CD4-positive, alpha-beta memory T cell (primary cell): ENCODE measurements at regions of chr5 and their contacts with region 1.

Region 1: GRCh38 chr5:61331407-61332357 is at the start of gene ZSWIM6:
- DNase-seq: peak; percentile 96 to 99 (median 98)
- H3K4me3 ChIP-seq: peak within 1 kb of the TSS; percentile 42 to 88
- H3K4me3 Mint-ChIP-seq: peak within 1 kb of the TSS; percentile 82 to 100 (median 95)
- H3K27ac ChIP-seq: peak within 1 kb of the TSS; percentile 82
- H3K27ac Mint-ChIP-seq: peak within 1 kb of the TSS; percentile 91 to 99 (median 97)
- H3K4me1 ChIP-seq: peaks cover 24% of the 10 kb centered on the region
- H3K4me1 Mint-ChIP-seq: peaks cover 21 to 51% (median 28%) of the 10 kb centered on the region in 4 donors
- H3K27me3 ChIP-seq: no peaks in the 10 kb centered on the region
- H3K27me3 Mint-ChIP-seq: peaks cover 15 to 18% of the 10 kb centered on the region in 2 donors
- total RNA-seq, gene ZSWIM6: 10.3 to 11.3 TPM

Region 2: GRCh38 chr5:60699530-60700382 is 631.9 kb before region 1 on chr5 and contains the start of gene DEPDC1B:
- CTCF ChIA-PET with region 1: interaction called, 3 read pairs
- POLR2A ChIA-PET with region 1: interaction called, 6 read pairs
- intact Hi-C with region 1: loop called (anchors 1 kb)
- DNase-seq: peak; percentile 81 to 86 (median 83)
- H3K4me3 ChIP-seq: peak within 1 kb of the TSS; percentile 98 to 99
- H3K4me3 Mint-ChIP-seq: peak within 1 kb of the TSS; percentile 91 to 98 (median 94)
- H3K27ac ChIP-seq: peak within 1 kb of the TSS; percentile 61
- H3K27ac Mint-ChIP-seq: peak within 1 kb of the TSS; percentile 75 to 92 (median 88)
- H3K4me1 ChIP-seq: peaks cover 18% of the 10 kb centered on the region
- H3K4me1 Mint-ChIP-seq: peaks cover 9 to 28% (median 20%) of the 10 kb centered on the region in 4 donors
- H3K27me3 ChIP-seq: no peaks in the 10 kb centered on the region
- H3K27me3 Mint-ChIP-seq: no peaks in the 10 kb centered on the region
- total RNA-seq, gene DEPDC1B: 0.19 to 0.70 TPM

Region 3: GRCh38 chr5:61055434-61056006 is 276.2 kb before region 1 on chr5:
- CTCF ChIA-PET with region 1: interaction called, 4 read pairs
- POLR2A ChIA-PET with region 1: no interaction called
- intact Hi-C with region 1: loop called (anchors 5 kb)
- DNase-seq: peak; percentile 5 to 32 (median 16)
- H3K4me3 ChIP-seq: no peak overlapping the region
- H3K4me3 Mint-ChIP-seq: no peak overlapping the region
- H3K27ac ChIP-seq: no peak overlapping the region
- H3K27ac Mint-ChIP-seq: no peak overlapping the region
- H3K4me1 ChIP-seq: no peaks in the 10 kb centered on the region
- H3K4me1 Mint-ChIP-seq: peaks cover 0 to 3% (median 0%) of the 10 kb centered on the region in 4 donors
- H3K27me3 ChIP-seq: no peaks in the 10 kb centered on the region
- H3K27me3 Mint-ChIP-seq: no peaks in the 10 kb centered on the region

Region 4: GRCh38 chr5:61280205-61280604 is 51.5 kb before region 1 on chr5:
- CTCF ChIA-PET with region 1: interaction called, 4 read pairs
- POLR2A ChIA-PET with region 1: interaction called, 15 read pairs
- intact Hi-C with region 1: loop called (anchors 5 kb)
- DNase-seq: no peak
- H3K4me3 ChIP-seq: no peak overlapping the region
- H3K4me3 Mint-ChIP-seq: no peak overlapping the region
- H3K27ac ChIP-seq: no peak overlapping the region
- H3K27ac Mint-ChIP-seq: no peak overlapping the region
- H3K4me1 ChIP-seq: peaks cover 10% of the 10 kb centered on the region
- H3K4me1 Mint-ChIP-seq: peaks cover 17 to 33% (median 26%) of the 10 kb centered on the region in 4 donors
- H3K27me3 ChIP-seq: no peaks in the 10 kb centered on the region
- H3K27me3 Mint-ChIP-seq: no peaks in the 10 kb centered on the region

Region 5: DNA sequence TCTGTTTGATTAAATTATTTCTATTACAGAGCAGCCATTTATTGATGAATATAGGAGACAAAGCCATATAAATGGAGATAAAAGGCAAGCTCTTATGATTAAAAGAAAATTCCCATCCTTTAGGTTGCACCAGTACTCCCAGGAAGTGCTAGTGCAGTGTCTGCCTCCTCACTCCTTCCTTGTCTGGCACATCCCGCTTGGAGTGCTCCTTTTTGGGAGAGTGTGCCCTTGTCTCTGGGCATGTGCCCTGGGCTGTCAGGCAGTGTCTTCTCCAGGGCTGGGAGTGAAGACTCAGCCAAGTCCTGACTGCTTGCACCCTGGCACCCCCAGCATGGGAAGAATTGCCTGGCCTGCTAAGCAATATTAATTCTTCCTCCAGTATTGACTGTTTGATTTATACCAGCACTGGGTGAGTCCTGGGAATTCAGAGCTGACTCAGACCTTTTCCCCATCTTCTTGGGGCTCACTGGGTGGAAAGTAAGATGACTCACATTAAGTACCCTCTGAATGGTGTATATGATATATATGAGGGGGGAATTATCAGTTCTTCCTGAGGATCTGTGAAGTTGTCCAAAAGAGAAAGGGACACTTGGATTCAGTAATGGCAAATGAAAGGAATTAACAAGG is 62.5 kb after region 1 on chr5:
- CTCF ChIA-PET with region 1: no interaction called
- POLR2A ChIA-PET with region 1: no interaction called
- intact Hi-C with region 1: no loop called
- DNase-seq: no peak
- H3K4me3 ChIP-seq: no peak overlapping the region
- H3K4me3 Mint-ChIP-seq: no peak overlapping the region
- H3K27ac ChIP-seq: no peak overlapping the region
- H3K27ac Mint-ChIP-seq: peak overlapping the region in 2 of 7 donors; percentile 13 to 30
- H3K4me1 ChIP-seq: no peaks in the 10 kb centered on the region
- H3K4me1 Mint-ChIP-seq: peaks cover 10 to 14% (median 11%) of the 10 kb centered on the region in 4 donors
- H3K27me3 ChIP-seq: no peaks in the 10 kb centered on the region
- H3K27me3 Mint-ChIP-seq: no peaks in the 10 kb centered on the region

Region 6: GRCh38 chr5:61658592-61659008 is 326.9 kb after region 1 on chr5:
- CTCF ChIA-PET with region 1: interaction called, 3 read pairs
- POLR2A ChIA-PET with region 1: no interaction called
- intact Hi-C with region 1: loop called (anchors 1 kb)
- DNase-seq: peak; percentile 58 to 67 (median 61)
- H3K4me3 ChIP-seq: no peak overlapping the region
- H3K4me3 Mint-ChIP-seq: no peak overlapping the region
- H3K27ac ChIP-seq: no peak overlapping the region
- H3K27ac Mint-ChIP-seq: no peak overlapping the region
- H3K4me1 ChIP-seq: no peaks in the 10 kb centered on the region
- H3K4me1 Mint-ChIP-seq: peaks cover 0 to 2% (median 0%) of the 10 kb centered on the region in 4 donors
- H3K27me3 ChIP-seq: peaks cover 3% of the 10 kb centered on the region
- H3K27me3 Mint-ChIP-seq: peaks cover 5 to 19% of the 10 kb centered on the region in 2 donors

Region 7: DNA sequence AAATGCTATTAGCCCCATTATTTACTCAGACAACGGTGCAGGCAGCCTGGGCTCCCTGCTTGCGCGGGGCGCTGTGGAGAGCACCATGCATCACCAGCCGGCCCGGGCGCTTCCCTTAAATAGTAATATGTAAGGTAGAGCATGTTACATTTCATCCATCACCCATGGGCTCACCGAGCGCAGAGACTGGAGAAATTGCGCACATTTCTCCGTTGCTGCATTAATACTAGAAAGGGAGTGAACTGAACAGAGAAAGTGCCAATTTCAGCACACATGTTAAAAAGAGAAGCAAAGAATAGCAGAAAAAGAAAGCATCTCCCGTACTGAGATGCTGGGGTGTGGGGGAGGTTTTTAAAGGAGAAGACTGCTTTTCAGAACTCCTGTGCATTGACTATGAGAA is 400.7 kb after region 1 on chr5:
- CTCF ChIA-PET with region 1: no interaction called
- POLR2A ChIA-PET with region 1: no interaction called
- intact Hi-C with region 1: no loop called
- DNase-seq: no peak
- H3K4me3 ChIP-seq: no peak overlapping the region
- H3K4me3 Mint-ChIP-seq: no peak overlapping the region
- H3K27ac ChIP-seq: no peak overlapping the region
- H3K27ac Mint-ChIP-seq: no peak overlapping the region
- H3K4me1 ChIP-seq: no peaks in the 10 kb centered on the region
- H3K4me1 Mint-ChIP-seq: no peaks in the 10 kb centered on the region
- H3K27me3 ChIP-seq: no peaks in the 10 kb centered on the region
- H3K27me3 Mint-ChIP-seq: peaks cover 6 to 11% of the 10 kb centered on the region in 2 donors

Region 8: DNA sequence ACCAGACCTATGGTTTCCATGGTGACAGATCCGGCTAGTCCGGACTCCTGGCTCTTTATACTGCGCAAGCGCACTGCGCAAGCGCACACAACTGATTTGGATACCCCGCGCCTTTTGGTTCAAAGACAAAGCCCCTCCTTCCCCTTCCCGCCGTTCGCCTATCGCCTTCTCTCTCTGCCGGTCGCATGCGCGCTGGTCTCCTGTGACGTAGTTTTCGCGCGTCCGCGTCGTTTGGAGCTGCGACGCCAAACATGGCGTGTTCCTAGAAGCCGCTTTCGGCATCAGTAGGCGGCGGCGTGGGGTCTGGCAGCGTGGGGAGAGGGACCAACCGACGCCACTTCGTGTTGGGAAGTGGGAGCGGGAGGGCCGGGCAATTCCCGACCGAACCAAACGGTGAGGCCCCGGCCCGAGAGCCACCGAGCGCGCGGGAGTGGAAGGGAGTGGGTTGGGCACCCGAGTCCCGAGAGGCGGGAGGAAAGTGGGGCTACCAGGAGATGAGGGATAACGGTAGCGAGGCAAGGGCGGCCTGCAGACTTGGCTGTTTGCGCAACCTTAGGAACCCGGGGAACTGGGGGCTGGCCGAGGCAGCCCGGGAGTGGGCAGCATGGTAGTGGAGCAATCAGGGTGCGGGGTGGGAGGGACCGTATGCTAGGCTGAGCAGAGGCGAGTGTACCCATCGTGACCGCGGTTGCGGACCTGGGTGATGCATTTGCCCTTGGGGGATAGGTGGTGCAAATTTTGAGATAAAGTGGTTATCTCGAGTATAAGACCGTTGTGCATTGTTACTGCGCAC is 1081.1 kb after region 1 on chr5 and contains the start of gene IPO11:
- CTCF ChIA-PET with region 1: no interaction called
- POLR2A ChIA-PET with region 1: interaction called, 3 read pairs
- intact Hi-C with region 1: loop called (anchors 5 kb)
- DNase-seq: peak; percentile 98 to 99 (median 98)
- H3K4me3 ChIP-seq: peak within 1 kb of the TSS; percentile 82 to 87
- H3K4me3 Mint-ChIP-seq: peak within 1 kb of the TSS; percentile 82 to 97 (median 93)
- H3K27ac ChIP-seq: peak within 1 kb of the TSS; percentile 68
- H3K27ac Mint-ChIP-seq: peak within 1 kb of the TSS; percentile 88 to 98 (median 95)
- H3K4me1 ChIP-seq: peaks cover 17% of the 10 kb centered on the region
- H3K4me1 Mint-ChIP-seq: peaks cover 19 to 31% (median 23%) of the 10 kb centered on the region in 4 donors
- H3K27me3 ChIP-seq: no peaks in the 10 kb centered on the region
- H3K27me3 Mint-ChIP-seq: no peaks in the 10 kb centered on the region
- total RNA-seq, gene IPO11: 23.8 to 28.5 TPM